BJ (cell line): ENCODE measurements at regions of chr10 and their contacts with region 1.

Region 1: GRCh38 chr10:90912174-90912573 is 8.7 kb downstream of the ANKRD1 start:
- DNase-seq: no peak
- H3K4me3 ChIP-seq: no peak overlapping the region
- H3K27me3 ChIP-seq: no peaks in the 10 kb centered on the region
- CTCF ChIP-seq: no peak

Region 2: DNA sequence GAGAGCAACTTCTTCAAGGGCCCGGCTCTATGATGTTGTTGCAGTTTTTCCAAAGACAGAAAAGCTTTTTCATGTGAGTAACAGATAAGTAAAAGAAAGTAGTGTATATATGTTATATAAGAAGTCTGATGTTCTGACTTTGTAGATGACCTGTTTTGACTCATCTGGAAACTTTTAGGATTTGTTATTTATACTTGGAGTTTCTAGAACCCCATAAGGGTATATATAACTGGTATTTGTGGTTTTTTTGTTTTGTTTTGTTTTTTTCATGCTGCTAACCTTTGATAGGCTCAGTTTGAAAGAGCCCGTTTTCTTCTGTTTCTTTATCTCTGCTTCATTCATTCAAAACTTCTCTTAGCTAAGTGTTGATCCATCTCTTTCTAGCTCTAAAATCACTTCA is 33.1 kb before region 1 on chr10:
- CTCF ChIA-PET with region 1: interaction called, 16 read pairs
- POLR2A ChIA-PET with region 1: no interaction called
- DNase-seq: no peak
- H3K4me3 ChIP-seq: no peak overlapping the region
- H3K27me3 ChIP-seq: no peaks in the 10 kb centered on the region
- CTCF ChIP-seq: no peak

Region 3: DNA sequence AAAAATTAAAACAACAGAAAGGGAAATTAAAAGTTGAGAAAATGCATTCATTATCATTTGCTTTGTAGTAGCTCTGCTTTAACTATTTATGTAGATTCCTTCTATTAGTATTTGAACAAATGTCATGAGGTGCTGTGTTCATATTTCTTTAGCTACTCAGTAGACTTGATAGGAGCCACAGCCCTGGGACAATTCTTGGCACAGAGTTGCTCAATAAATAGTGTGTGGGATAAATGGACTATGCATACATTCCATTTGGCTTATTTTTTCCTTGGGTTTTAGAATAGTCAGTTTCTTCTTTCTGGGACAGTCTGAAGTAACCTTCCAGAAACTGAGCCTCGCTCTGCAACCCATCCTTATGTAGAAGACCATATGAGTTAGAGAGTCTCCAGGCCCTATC is 27.0 kb before region 1 on chr10:
- CTCF ChIA-PET with region 1: interaction called, 16 read pairs
- POLR2A ChIA-PET with region 1: no interaction called
- DNase-seq: peak; percentile 65
- H3K4me3 ChIP-seq: no peak overlapping the region
- H3K27me3 ChIP-seq: no peaks in the 10 kb centered on the region
- CTCF ChIP-seq: no peak

Region 4: GRCh38 chr10:90930070-90930837 is 18.1 kb after region 1 on chr10:
- CTCF ChIA-PET with region 1: interaction called, 13 read pairs
- POLR2A ChIA-PET with region 1: no interaction called
- DNase-seq: peak; percentile 81
- H3K4me3 ChIP-seq: no peak overlapping the region
- H3K27me3 ChIP-seq: no peaks in the 10 kb centered on the region
- CTCF ChIP-seq: no peak

Region 5: DNA sequence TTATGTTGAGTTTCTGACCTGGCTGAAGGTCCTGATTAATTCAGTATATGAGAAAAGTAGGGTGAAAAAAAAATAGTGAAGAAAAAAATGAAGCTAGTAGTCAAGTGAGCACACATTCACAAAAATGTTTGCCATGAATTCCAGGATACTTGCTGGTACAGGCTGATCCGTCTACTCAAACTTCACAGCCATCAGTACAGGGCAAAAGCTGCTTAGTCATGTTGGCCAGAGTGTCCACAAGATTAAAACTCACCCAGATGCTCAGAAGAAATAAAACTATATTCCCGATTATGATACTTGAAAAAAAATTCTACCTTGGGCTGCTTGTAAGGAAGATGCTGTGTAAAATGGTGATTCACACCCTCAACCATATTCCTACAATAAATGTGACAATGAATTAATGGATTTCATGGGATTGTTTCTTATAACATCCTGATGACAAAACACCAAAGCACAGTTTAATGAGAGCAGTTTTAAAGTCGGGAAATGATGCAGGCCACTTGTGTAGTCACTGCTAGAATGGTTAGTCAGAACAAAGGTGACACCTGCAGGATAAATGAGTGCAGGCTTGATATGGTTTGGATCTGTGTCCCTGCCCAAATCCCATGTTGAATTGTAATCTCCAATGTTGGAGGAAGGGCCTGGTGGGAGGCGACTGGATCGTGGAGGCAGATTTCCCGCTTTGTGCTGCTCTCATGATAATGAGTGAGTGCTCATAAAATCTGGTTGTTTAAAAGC is 57.9 kb after region 1 on chr10:
- CTCF ChIA-PET with region 1: interaction called, 62 read pairs
- POLR2A ChIA-PET with region 1: no interaction called
- DNase-seq: peak; percentile 31
- H3K4me3 ChIP-seq: no peak overlapping the region
- H3K27me3 ChIP-seq: no peaks in the 10 kb centered on the region
- CTCF ChIP-seq: peak; percentile 18; the same call in 1 of the 2 replicates

Region 6: DNA sequence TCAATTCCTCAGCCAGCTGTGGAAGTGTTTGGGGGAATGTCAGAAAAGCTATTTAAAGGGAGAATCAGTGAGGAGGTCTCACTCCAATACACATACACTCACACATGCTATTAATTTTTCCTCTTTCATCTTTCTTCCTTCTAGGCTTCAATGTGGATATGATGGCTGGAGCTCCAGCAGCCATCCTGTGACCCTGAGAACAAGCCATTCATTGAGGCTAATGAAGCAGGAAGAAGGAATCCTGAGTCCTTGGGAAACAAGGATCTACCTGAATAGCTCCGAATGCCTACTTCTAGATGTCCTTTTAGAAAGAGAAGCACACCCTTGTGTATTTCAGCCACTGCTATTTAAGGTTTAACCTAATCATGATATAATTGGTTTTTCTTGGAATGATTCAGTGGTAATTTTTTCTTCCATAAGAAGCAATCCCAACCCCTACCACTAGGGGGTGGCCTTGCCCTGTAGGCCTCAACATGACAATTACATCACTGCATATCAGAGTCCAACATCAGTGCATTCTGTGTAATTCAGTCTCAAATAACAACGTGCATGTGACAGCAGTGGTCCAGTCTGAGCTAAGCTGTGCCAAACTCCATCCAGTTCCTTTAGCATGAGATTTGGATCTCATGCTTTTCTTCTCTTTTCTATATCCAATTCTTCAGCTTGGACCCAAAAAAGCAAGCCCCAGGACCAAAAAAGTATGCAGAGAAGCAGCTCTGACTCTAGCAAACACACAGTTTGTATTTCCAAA is 94.0 kb after region 1 on chr10:
- CTCF ChIA-PET with region 1: interaction called, 27 read pairs
- POLR2A ChIA-PET with region 1: no interaction called
- DNase-seq: no peak
- H3K4me3 ChIP-seq: no peak overlapping the region
- H3K27me3 ChIP-seq: no peaks in the 10 kb centered on the region
- CTCF ChIP-seq: peak; percentile 93

Region 7: DNA sequence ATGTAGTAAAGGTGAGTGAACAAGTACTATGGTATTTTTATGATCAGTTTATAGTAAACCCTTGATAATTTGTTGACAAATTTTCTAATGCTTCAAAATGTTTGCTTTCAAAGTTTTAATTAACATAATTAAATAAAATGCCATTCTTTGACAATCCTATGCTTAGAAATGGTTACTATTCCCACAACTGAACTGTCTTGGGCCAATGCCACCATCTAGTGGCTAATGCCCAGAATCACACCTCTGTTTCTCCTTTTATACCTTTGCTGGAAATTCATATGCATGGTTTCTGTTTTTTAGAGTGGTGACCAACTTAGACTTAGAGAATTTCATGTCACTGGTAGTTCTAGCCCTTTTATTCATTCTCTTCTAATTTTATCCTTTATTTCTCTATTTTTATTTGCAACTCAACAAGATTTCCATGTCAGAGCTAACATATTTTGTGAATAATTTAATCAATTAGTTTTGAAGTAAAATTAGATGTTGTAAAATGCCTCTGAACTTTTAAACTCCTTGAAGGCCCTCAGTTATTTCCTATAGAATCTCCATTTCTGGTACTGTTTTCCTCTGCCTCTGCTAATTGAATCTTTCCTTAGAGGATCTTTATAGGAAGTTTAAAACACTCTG is 339.4 kb after region 1 on chr10:
- CTCF ChIA-PET with region 1: interaction called, 76 read pairs
- POLR2A ChIA-PET with region 1: no interaction called
- DNase-seq: peak; percentile 1
- H3K4me3 ChIP-seq: no peak overlapping the region
- H3K27me3 ChIP-seq: no peaks in the 10 kb centered on the region
- CTCF ChIP-seq: peak; percentile 84